ENCODE measurements at regions of chr11 and their contacts with region 1.

Region 1: GRCh38 chr11:114211444-114212260 is 84.5 kb upstream of the NNMT start:
- DNase-seq: no peak
- H3K4me3 ChIP-seq: no peak overlapping the region
- H3K27ac ChIP-seq: no peak overlapping the region
- H3K4me1 ChIP-seq: peaks cover 8 to 41% (median 27%) of the 10 kb centered on the region in 4 experiments
- H3K27me3 ChIP-seq: no peaks in the 10 kb centered on the region

Region 2: GRCh38 chr11:113923572-113923971 is 288.1 kb before region 1 on chr11:
- CTCF ChIA-PET with region 1: no interaction called
- POLR2A ChIA-PET with region 1: no interaction called
- DNase-seq: no peak
- H3K4me3 ChIP-seq: no peak overlapping the region
- H3K27ac ChIP-seq: no peak overlapping the region
- H3K4me1 ChIP-seq: no peaks in the 10 kb centered on the region
- H3K27me3 ChIP-seq: peaks cover 0 to 6% (median 0%) of the 10 kb centered on the region in 5 experiments

Region 3: DNA sequence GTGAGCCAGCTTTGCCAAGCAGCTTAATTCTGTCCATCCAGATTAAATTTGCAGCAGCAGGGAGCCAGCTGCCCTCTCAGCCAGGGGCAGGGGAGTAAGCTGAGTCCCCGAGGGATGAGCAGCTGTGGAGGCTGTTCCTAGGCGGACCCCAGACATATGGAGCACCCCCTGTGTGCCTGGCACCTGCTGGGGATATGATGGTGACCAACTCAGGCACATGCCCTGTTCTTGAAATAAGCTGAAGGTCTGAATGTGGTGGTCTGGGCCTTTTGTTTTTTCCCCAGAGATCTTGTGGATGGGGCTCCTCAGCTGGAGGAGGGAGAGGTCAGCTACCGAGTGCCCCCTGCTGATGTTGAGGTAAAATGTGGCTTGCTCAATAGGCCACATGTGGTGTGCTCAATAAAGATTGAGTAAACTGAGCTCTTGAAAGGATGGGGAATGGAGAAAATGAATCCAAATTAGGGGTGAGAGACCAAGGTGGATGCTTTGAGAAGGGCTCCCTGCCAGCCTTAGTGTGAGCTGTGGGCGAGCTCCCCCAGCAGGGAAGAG is 18.7 kb before region 1 on chr11:
- CTCF ChIA-PET with region 1: interaction called, 10 read pairs
- POLR2A ChIA-PET with region 1: interaction called, 3 read pairs
- DNase-seq: no peak
- H3K4me3 ChIP-seq: no peak overlapping the region
- H3K27ac ChIP-seq: no peak overlapping the region
- H3K4me1 ChIP-seq: peaks cover 2 to 20% (median 7%) of the 10 kb centered on the region in 4 experiments
- H3K27me3 ChIP-seq: no peaks in the 10 kb centered on the region

Measured in common myeloid progenitor, CD34-positive (primary cell).